Panc1 (cell line): ENCODE measurements at regions of chr1 and their contacts with region 1.

Region 1: DNA sequence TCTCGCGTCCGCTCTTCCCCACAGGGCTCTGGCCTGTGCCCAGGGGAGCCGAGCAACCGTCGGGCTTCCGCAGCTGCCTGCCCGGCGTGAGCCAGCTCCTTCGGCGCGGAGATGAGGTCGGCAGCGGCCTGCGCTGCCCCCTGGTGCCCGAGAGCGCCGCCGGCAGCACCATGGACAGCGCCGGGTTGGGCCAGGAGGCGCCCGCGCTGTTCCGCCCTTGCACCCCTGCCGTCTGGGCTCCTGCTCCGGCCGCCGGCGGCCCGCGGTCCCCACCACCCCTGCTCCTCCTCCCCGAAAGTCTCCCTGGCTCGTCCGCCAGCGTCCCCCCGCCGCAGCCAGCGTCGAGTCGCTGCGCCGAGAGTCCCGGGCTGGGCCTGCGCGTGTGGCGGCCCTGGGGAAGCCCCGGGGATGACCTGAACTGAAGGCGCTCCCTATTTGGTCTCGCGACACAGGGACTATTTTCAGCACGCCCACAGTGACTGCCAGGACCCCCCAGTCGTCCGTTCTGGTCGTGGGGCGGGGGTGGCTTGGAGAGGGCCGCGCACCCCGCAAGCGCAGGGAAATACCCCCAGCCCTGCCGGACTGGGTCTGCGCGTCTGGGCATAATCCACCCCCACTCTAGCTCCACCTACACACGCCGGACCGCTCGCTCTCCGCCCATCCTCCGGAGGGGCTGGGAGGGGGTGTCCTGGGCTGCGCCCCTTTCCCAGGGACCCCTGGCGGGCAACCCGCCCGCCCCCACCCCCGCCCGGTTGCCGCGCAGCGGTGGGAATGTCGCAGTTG is 1.3 kb downstream of the HES3 start:
- DNase-seq: peak; percentile 36
- ATAC-seq: peak; percentile 72
- H3K4me3 ChIP-seq: peak overlapping the region; percentile 48 to 64
- H3K27ac ChIP-seq: no peak overlapping the region
- H3K4me1 ChIP-seq: peaks cover 10% of the 10 kb centered on the region
- H3K27me3 ChIP-seq: no peaks in the 10 kb centered on the region; the same call in 1 of the 2 replicates
- CTCF ChIP-seq: peak; percentile 91

Region 2: GRCh38 chr1:6052543-6053205 is 192.6 kb before region 1 on chr1:
- CTCF ChIA-PET with region 1: interaction called, 4 read pairs
- POLR2A ChIA-PET with region 1: no interaction called
- in situ Hi-C with region 1: no loop called
- intact Hi-C with region 1: loop called (anchors 2 kb)
- DNase-seq: peak; percentile 18
- ATAC-seq: peak; percentile 68
- H3K4me3 ChIP-seq: no peak overlapping the region
- H3K27ac ChIP-seq: no peak overlapping the region
- H3K4me1 ChIP-seq: no peaks in the 10 kb centered on the region
- H3K27me3 ChIP-seq: no peaks in the 10 kb centered on the region
- CTCF ChIP-seq: peak; percentile 82

Region 3: GRCh38 chr1:6343506-6344405 is 98.5 kb after region 1 on chr1:
- CTCF ChIA-PET with region 1: interaction called, 29 read pairs
- POLR2A ChIA-PET with region 1: no interaction called
- in situ Hi-C with region 1: no loop called
- intact Hi-C with region 1: loop called (anchors 1 kb)
- DNase-seq: peak; percentile 59
- ATAC-seq: peak; percentile 89
- H3K4me3 ChIP-seq: no peak overlapping the region
- H3K27ac ChIP-seq: no peak overlapping the region
- H3K4me1 ChIP-seq: peaks cover 7% of the 10 kb centered on the region
- H3K27me3 ChIP-seq: no peaks in the 10 kb centered on the region
- CTCF ChIP-seq: peak; percentile 95

Region 4: GRCh38 chr1:6414443-6414844 is 169.2 kb after region 1 on chr1:
- CTCF ChIA-PET with region 1: no interaction called
- POLR2A ChIA-PET with region 1: no interaction called
- in situ Hi-C with region 1: no loop called
- intact Hi-C with region 1: loop called (anchors 5 kb)
- DNase-seq: no peak
- ATAC-seq: peak; percentile 80
- H3K4me3 ChIP-seq: peak overlapping the region in 1 of 2 experiments; percentile 28; a peak in 2 of 4 replicates
- H3K27ac ChIP-seq: 0 out of 2 replicates have a peak overlapping the region, but pooled peaks have one; percentile 8
- H3K4me1 ChIP-seq: peaks cover 17% of the 10 kb centered on the region
- H3K27me3 ChIP-seq: no peaks in the 10 kb centered on the region
- CTCF ChIP-seq: peak; percentile 93

Region 5: DNA sequence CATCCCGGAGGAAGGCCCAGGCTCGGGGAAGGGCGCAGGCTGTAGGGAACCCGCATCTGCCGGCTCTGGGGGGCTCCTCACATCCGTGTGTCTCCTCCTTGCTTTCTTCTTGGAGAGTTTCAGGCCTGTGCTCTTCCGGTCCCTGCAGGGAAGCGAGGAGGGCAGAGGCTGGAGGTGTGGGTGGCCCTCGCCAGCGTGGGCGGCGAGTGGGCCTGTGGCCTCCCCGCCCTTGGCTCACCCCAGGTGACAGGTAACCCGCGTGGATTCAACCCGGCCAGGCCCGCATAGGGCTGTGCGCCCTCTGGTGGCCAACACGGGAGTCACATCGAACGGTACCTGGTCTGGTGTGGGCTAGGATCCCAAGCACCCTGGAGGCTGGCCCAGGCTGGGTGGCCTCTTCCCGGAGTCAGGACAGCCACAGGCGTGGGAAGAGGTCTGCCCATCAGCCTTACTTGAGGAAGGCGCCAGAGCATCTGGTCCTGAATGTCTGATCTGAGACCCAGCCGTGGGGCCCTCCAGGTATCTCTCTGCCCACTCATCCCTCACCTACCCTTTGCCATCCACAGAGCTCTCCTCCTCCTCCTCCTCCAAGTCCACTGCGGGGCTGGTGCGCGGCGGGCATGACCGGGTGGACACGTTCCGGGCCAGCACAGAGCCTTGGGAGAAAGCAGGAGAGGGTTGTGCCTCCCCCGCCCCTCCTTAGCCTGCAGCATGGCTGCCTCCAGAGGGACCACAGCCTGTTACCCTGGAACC is 230.3 kb after region 1 on chr1:
- CTCF ChIA-PET with region 1: no interaction called
- POLR2A ChIA-PET with region 1: no interaction called
- in situ Hi-C with region 1: no loop called
- intact Hi-C with region 1: loop called (anchors 5 kb)
- DNase-seq: no peak
- ATAC-seq: peak; percentile 88
- H3K4me3 ChIP-seq: no peak overlapping the region
- H3K27ac ChIP-seq: no peak overlapping the region
- H3K4me1 ChIP-seq: no peaks in the 10 kb centered on the region
- H3K27me3 ChIP-seq: no peaks in the 10 kb centered on the region
- CTCF ChIP-seq: peak; percentile 99